ENCODE measurements at regions of chr1 and their contacts with region 1.

Region 1: GRCh38 chr1:46247436-46248121 is at the start of gene RAD54L:
- DNase-seq: peak; percentile 99
- H3K4me3 ChIP-seq: peak within 1 kb of the TSS; percentile 57
- H3K27ac ChIP-seq: peak within 1 kb of the TSS; percentile 73
- H3K4me1 ChIP-seq: peaks cover 7% of the 10 kb centered on the region
- H3K27me3 ChIP-seq: no peaks in the 10 kb centered on the region
- CTCF ChIP-seq: no peak
- total RNA-seq, gene RAD54L: 49.0 and 50.7 TPM in 2 replicates

Region 2: GRCh38 chr1:45746922-45747321 is 500.7 kb before region 1 on chr1:
- CTCF ChIA-PET with region 1: no interaction called
- POLR2A ChIA-PET with region 1: no interaction called
- intact Hi-C with region 1: no loop called
- DNase-seq: no peak
- H3K4me3 ChIP-seq: no peak overlapping the region
- H3K27ac ChIP-seq: no peak overlapping the region
- H3K4me1 ChIP-seq: peaks cover 4% of the 10 kb centered on the region
- H3K27me3 ChIP-seq: no peaks in the 10 kb centered on the region
- CTCF ChIP-seq: no peak

Region 3: GRCh38 chr1:46077644-46078043 is 169.9 kb before region 1 on chr1:
- CTCF ChIA-PET with region 1: no interaction called
- POLR2A ChIA-PET with region 1: no interaction called
- intact Hi-C with region 1: no loop called
- DNase-seq: peak; percentile 19
- H3K4me3 ChIP-seq: no peak overlapping the region
- H3K27ac ChIP-seq: peak overlapping the region; percentile 70
- H3K4me1 ChIP-seq: peaks cover 25% of the 10 kb centered on the region
- H3K27me3 ChIP-seq: no peaks in the 10 kb centered on the region
- CTCF ChIP-seq: no peak

Region 4: DNA sequence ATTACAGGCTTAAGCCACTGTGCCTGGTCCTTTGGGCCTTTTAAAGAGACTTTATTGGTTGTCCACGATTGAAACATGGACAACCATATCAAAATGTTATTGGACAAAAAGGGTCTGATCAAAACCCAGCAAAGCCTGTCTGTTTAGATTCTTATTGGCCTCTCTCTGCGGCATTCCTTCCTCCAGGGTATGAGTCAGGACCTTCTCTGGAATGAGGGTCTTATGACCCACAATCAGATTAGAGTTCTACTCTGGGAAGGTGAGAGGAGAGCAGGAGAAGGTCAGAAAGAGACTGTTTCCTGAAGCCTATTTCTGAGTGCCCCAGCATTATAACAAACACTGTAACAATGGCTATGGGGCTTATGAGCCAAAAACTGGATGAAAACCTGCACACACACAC is 36.5 kb before region 1 on chr1:
- CTCF ChIA-PET with region 1: no interaction called
- POLR2A ChIA-PET with region 1: no interaction called
- intact Hi-C with region 1: no loop called
- DNase-seq: no peak
- H3K4me3 ChIP-seq: no peak overlapping the region
- H3K27ac ChIP-seq: no peak overlapping the region
- H3K4me1 ChIP-seq: no peaks in the 10 kb centered on the region
- H3K27me3 ChIP-seq: no peaks in the 10 kb centered on the region
- CTCF ChIP-seq: no peak

Region 5: GRCh38 chr1:46285730-46286477 is 38.3 kb after region 1 on chr1:
- CTCF ChIA-PET with region 1: no interaction called
- POLR2A ChIA-PET with region 1: interaction called, 12 read pairs
- intact Hi-C with region 1: no loop called
- DNase-seq: peak; percentile 76
- H3K4me3 ChIP-seq: no peak overlapping the region
- H3K27ac ChIP-seq: peak overlapping the region; percentile 85
- H3K4me1 ChIP-seq: peaks cover 18% of the 10 kb centered on the region
- H3K27me3 ChIP-seq: no peaks in the 10 kb centered on the region
- CTCF ChIP-seq: no peak

Region 6: GRCh38 chr1:46340404-46341221 is 93.0 kb after region 1 on chr1 and contains the start of gene NSUN4:
- CTCF ChIA-PET with region 1: no interaction called
- POLR2A ChIA-PET with region 1: no interaction called
- intact Hi-C with region 1: loop called (anchors 5 kb)
- DNase-seq: peak; percentile 98
- H3K4me3 ChIP-seq: peak within 1 kb of the TSS; percentile 58
- H3K27ac ChIP-seq: peak within 1 kb of the TSS; percentile 92
- H3K4me1 ChIP-seq: peaks cover 6% of the 10 kb centered on the region
- H3K27me3 ChIP-seq: no peaks in the 10 kb centered on the region
- CTCF ChIP-seq: peak; percentile 84
- total RNA-seq, gene NSUN4: 30.7 and 31.7 TPM in 2 replicates

Region 7: GRCh38 chr1:46466477-46467182 is 219.1 kb after region 1 on chr1:
- CTCF ChIA-PET with region 1: no interaction called
- POLR2A ChIA-PET with region 1: no interaction called
- intact Hi-C with region 1: no loop called
- DNase-seq: peak; percentile 92
- H3K4me3 ChIP-seq: peak overlapping the region; percentile 38
- H3K27ac ChIP-seq: no peak overlapping the region
- H3K4me1 ChIP-seq: peaks cover 39% of the 10 kb centered on the region
- H3K27me3 ChIP-seq: no peaks in the 10 kb centered on the region
- CTCF ChIP-seq: no peak